ENCODE measurements at regions of chr13 and their contacts with region 1.

Region 1: DNA sequence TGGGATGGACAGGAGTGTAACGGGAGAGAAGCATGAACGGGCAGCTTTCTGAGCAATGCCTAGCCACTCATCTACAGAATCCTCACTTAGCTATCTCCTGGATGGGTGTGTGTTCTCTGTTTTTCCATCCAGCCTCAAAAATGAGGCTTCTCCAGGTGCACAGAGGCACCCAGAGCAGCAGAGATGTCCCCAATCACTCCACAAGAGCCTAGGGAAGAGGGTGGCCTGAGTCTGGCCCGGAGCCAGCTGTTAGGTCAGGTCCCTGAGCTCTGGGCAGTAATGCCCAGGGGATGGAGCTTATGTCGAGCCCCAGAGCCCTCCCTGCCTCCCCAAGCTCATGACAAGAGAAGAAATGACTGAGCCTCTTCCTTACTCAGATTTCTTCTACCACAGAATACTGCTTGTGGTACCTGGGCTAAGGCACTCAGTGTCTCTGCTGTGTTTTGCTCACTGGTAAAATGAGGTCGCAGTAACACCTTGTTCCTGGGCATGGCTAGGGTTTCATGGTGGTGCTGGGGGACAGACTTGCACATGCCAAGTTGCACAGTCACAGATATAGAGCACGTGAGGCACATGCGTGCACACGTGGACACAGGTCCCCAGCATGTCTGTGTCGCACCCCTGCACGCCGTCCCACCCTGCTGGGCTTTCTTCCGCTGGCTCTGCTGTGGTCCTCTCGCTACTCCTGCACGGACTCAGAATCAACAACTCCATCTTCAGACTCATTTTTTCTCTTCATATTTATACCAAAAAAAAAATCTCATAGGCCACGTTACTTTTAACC is 86.6 kb upstream of the SOX1 start:
- DNase-seq: no peak
- ATAC-seq: no peak
- H3K4me3 ChIP-seq: no peak overlapping the region
- H3K27ac ChIP-seq: no peak overlapping the region
- H3K4me1 ChIP-seq: no peaks in the 10 kb centered on the region
- H3K27me3 ChIP-seq: peaks cover 0 to 7% of the 10 kb centered on the region in 2 experiments; a peak in 1 of 5 replicates
- CTCF ChIP-seq: no peak
- EP300 ChIP-seq: no peak
- POLR2A ChIP-seq: no peak
- RAD21 ChIP-seq: no peak

Region 2: GRCh38 chr13:111518161-111518792 is 462.1 kb before region 1 on chr13:
- CTCF ChIA-PET with region 1: no interaction called
- POLR2A ChIA-PET with region 1: no interaction called
- in situ Hi-C with region 1: no loop called
- intact Hi-C with region 1: loop called (anchors 5 kb)
- DNase-seq: peak in 2 of 4 experiments; percentile 5 to 10
- ATAC-seq: peak; percentile 48; the same call in 2 of the 3 replicates
- H3K4me3 ChIP-seq: no peak overlapping the region
- H3K27ac ChIP-seq: no peak overlapping the region
- H3K4me1 ChIP-seq: no peaks in the 10 kb centered on the region
- H3K27me3 ChIP-seq: peaks cover 0 to 22% of the 10 kb centered on the region in 2 experiments; a peak in 2 of 5 replicates
- CTCF ChIP-seq: peak in 1 of 3 experiments; percentile 22; a peak in 1 of 6 replicates
- EP300 ChIP-seq: no peak
- POLR2A ChIP-seq: no peak
- RAD21 ChIP-seq: no peak

Region 3: DNA sequence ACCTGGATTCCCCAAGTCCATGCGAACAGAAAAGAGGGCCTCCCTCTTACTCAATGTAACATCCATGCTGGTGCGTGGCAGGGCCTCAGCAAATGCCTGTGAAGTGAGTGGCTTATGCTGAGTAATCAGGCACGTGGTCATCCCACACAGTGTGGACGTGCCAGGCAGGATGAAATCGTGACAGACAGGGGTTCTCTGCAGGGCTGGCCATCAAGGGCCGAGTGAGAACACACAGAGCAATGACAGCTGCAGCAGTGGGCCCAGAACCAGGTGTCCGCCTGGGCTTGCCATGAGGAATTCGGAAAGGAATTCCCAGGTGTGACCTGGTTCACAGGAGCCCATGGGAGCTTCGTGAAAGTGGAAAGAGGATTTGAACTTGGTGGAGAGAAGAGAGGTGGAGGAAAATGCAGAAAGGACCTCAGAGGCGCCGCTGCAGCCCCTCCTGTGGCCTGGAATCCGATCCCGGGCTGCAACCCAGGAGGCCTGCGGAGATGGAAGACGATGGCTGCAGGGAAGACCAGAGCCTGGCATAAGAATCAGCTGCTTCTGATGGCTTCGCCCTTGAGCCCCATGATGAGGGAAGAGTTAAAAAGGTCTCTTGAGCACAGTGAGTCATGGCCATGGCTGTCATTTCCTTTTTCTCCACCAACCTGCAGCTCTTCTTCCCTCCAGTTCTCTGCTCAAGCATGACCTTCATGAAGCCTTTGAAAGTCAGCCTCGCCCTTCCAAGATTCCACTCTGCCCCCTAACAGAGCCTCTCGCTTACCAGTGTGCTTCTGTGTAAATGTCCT is 52.0 kb after region 1 on chr13:
- CTCF ChIA-PET with region 1: no interaction called
- POLR2A ChIA-PET with region 1: no interaction called
- in situ Hi-C with region 1: no loop called
- intact Hi-C with region 1: no loop called
- DNase-seq: no peak
- ATAC-seq: no peak
- H3K4me3 ChIP-seq: no peak overlapping the region
- H3K27ac ChIP-seq: no peak overlapping the region
- H3K4me1 ChIP-seq: no peaks in the 10 kb centered on the region
- H3K27me3 ChIP-seq: peaks cover 0 to 20% of the 10 kb centered on the region in 2 experiments; a peak in 2 of 5 replicates
- CTCF ChIP-seq: no peak
- EP300 ChIP-seq: no peak
- POLR2A ChIP-seq: no peak
- RAD21 ChIP-seq: no peak

Region 4: GRCh38 chr13:112241288-112241687 is 260.9 kb after region 1 on chr13:
- CTCF ChIA-PET with region 1: no interaction called
- POLR2A ChIA-PET with region 1: no interaction called
- in situ Hi-C with region 1: no loop called
- intact Hi-C with region 1: no loop called
- DNase-seq: no peak
- ATAC-seq: no peak
- H3K4me3 ChIP-seq: no peak overlapping the region
- H3K27ac ChIP-seq: no peak overlapping the region
- H3K4me1 ChIP-seq: no peaks in the 10 kb centered on the region
- H3K27me3 ChIP-seq: peaks cover 0 to 9% of the 10 kb centered on the region in 2 experiments; a peak in 1 of 5 replicates
- CTCF ChIP-seq: no peak
- EP300 ChIP-seq: no peak
- POLR2A ChIP-seq: no peak
- RAD21 ChIP-seq: no peak

Measured in K562 (cell line).